PC-3 (cell line): ENCODE measurements at regions of chr12 and their contacts with region 1.

Region 1: GRCh38 chr12:69157023-69157655 is 82.2 kb upstream of the CPSF6 start:
- DNase-seq: peak; percentile 89
- ATAC-seq: peak; percentile 91
- H3K4me3 ChIP-seq: no peak overlapping the region
- H3K27ac ChIP-seq: no peak overlapping the region
- H3K4me1 ChIP-seq: peaks cover 7% of the 10 kb centered on the region; the same call in 1 of the 2 replicates
- H3K27me3 ChIP-seq: no peaks in the 10 kb centered on the region
- CTCF ChIP-seq: peak; percentile 95

Region 2: GRCh38 chr12:68865399-68866164 is 291.6 kb before region 1 on chr12:
- CTCF ChIA-PET with region 1: no interaction called
- POLR2A ChIA-PET with region 1: no interaction called
- intact Hi-C with region 1: loop called (anchors 2 kb)
- DNase-seq: no peak
- ATAC-seq: no peak
- H3K4me3 ChIP-seq: no peak overlapping the region
- H3K27ac ChIP-seq: no peak overlapping the region
- H3K4me1 ChIP-seq: no peaks in the 10 kb centered on the region
- H3K27me3 ChIP-seq: no peaks in the 10 kb centered on the region
- CTCF ChIP-seq: no peak

Region 3: DNA sequence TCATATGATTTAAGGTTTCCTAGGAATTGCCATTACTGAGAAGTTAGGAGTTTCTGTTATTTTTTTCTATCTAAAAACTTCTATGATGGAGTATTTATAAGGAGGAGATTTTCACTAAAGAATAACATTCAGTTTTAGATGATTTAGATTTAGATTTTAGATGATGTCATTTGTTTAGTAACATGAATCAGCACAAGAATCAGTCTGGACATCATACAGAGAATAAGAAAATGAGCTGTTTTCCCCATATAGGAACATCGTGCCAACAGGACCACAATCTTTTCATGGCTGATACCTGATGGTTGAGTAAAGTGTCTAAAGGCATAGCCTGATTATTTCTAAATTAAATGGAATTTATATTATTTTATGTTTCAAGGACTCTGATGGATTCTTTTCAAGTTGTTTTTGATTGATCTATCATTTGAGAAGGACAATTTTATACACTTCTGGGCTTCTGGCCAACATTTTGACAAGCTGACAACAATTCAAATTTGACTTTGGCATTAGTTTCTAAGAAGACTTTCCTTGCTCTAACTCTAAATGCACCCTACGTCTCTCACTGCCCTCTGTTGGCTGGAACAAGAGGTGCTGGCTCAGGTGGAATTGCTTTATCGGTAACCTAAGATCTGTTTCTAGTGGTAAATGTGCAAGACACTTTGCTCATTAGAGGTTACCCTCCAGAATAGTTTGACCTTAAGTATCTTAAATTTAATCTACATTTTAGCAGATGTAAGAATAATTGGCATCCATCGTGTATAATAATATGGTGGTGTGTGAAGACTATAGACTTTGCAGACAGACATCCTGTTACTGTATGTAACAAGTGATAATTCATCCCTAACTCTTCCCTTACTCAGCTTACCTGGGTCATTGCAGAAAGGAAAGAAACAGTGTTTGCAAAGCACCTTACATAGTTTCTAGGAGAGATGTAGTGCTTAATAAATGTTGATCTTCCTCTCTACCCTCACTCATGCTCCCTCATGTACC is 39.5 kb after region 1 on chr12:
- CTCF ChIA-PET with region 1: no interaction called
- POLR2A ChIA-PET with region 1: no interaction called
- intact Hi-C with region 1: loop called (anchors 1 kb)
- DNase-seq: peak; percentile 47
- ATAC-seq: no peak
- H3K4me3 ChIP-seq: no peak overlapping the region
- H3K27ac ChIP-seq: no peak overlapping the region
- H3K4me1 ChIP-seq: no peaks in the 10 kb centered on the region
- H3K27me3 ChIP-seq: no peaks in the 10 kb centered on the region
- CTCF ChIP-seq: peak; percentile 54

Region 4: DNA sequence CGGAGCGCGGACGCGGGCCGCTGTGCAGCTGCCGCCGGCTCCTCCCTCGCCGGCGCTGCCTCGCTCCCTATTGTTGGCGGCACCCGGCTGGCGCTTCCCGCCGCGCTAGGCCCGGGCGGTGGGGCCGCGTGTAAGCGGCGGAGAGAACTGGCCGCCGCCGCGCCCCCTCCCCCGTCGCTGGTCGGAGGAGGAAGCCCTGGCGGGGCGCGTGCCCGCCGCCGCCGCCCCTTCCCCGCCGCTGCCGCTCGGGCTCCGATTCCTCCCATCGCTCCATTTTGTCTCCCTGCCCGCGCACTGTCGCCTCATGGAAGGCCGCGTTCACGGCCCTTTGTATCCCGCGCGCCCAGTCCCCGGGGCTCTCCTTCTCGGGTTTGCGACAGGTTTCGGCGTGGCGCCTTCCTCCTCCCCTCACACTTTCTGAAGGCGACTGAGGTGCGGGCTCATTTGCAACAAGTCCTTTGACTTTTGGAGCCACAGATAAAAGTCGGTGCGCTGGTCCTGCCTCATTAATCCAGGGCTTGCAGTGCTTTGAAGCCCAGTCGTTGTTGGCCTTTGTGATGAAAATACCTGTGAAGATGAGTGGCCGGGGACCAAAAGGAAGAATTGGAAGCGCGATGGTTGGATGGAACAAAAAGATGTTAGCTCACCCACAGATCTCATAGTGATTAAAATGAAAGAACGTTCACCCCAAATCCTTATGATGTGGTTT is 82.9 kb after region 1 on chr12:
- CTCF ChIA-PET with region 1: no interaction called
- POLR2A ChIA-PET with region 1: no interaction called
- intact Hi-C with region 1: loop called (anchors 5 kb)
- DNase-seq: peak; percentile 29
- ATAC-seq: peak; percentile 48
- H3K4me3 ChIP-seq: peak overlapping the region; percentile 100
- H3K27ac ChIP-seq: peak overlapping the region; percentile 28
- H3K4me1 ChIP-seq: peaks cover 13% of the 10 kb centered on the region
- H3K27me3 ChIP-seq: no peaks in the 10 kb centered on the region
- CTCF ChIP-seq: no peak

Region 5: GRCh38 chr12:69254046-69254445 is 96.9 kb after region 1 on chr12:
- CTCF ChIA-PET with region 1: no interaction called
- POLR2A ChIA-PET with region 1: no interaction called
- intact Hi-C with region 1: loop called (anchors 2 kb)
- DNase-seq: peak; percentile 65
- ATAC-seq: no peak
- H3K4me3 ChIP-seq: no peak overlapping the region
- H3K27ac ChIP-seq: no peak overlapping the region
- H3K4me1 ChIP-seq: no peaks in the 10 kb centered on the region
- H3K27me3 ChIP-seq: no peaks in the 10 kb centered on the region
- CTCF ChIP-seq: peak; percentile 81

Region 6: DNA sequence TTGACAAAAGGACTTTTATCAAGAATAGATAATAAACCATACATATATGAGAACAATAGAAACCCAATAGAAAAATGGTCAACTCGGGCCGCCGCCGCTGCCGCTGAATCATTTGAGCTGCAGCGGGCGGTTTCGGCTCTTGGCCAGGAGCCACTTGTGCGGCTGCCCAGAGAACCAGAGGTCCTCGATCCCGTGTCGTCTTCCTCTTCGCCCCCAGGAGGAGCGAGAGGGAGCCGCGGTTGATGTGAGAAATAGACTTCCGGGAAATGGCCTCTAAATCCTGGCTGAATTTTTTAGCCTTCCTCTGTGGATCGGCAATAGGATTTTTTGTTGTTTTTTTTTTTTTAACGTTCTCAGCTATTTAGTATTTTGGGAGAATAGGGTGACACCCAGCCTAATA is 127.0 kb after region 1 on chr12:
- CTCF ChIA-PET with region 1: no interaction called
- POLR2A ChIA-PET with region 1: no interaction called
- intact Hi-C with region 1: loop called (anchors 10 kb)
- DNase-seq: peak; percentile 81
- ATAC-seq: peak; percentile 68
- H3K4me3 ChIP-seq: peak overlapping the region; percentile 40
- H3K27ac ChIP-seq: no peak overlapping the region
- H3K4me1 ChIP-seq: peaks cover 11% of the 10 kb centered on the region
- H3K27me3 ChIP-seq: no peaks in the 10 kb centered on the region
- CTCF ChIP-seq: no peak; the same call in 1 of the 2 replicates